Esophagus squamous epithelium (tissue), 5 donors: ENCODE measurements at regions of chr19 and their contacts with region 1.

Region 1: GRCh38 chr19:40662921-40663694 is 27.3 kb downstream of the NUMBL start:
- DNase-seq: peak; percentile 49
- H3K4me3 ChIP-seq: peak overlapping the region; percentile 59 to 83 (median 69)
- H3K27ac ChIP-seq: peak overlapping the region; percentile 79 to 93 (median 86)
- H3K4me1 ChIP-seq: peaks cover 5 to 32% (median 11%) of the 10 kb centered on the region in 3 donors
- H3K27me3 ChIP-seq: no peaks in the 10 kb centered on the region
- CTCF ChIP-seq: peak; percentile 97 to 99 (median 99)
- POLR2A ChIP-seq: peak in 1 of 4 donors; percentile 37

Region 2: GRCh38 chr19:40811478-40812341 is 148.6 kb after region 1 on chr19:
- intact Hi-C with region 1: loop called (anchors 5 kb)
- DNase-seq: no peak
- H3K4me3 ChIP-seq: peak overlapping the region; percentile 27 to 66 (median 50)
- H3K27ac ChIP-seq: peak overlapping the region; percentile 67 to 87 (median 84)
- H3K4me1 ChIP-seq: peaks cover 25 to 63% (median 45%) of the 10 kb centered on the region in 3 donors
- H3K27me3 ChIP-seq: no peaks in the 10 kb centered on the region
- CTCF ChIP-seq: peak in 1 of 6 experiments; percentile 11
- POLR2A ChIP-seq: no peak

Region 3: GRCh38 chr19:41133260-41133659 is 470.2 kb after region 1 on chr19:
- intact Hi-C with region 1: loop called (anchors 10 kb)
- DNase-seq: no peak
- H3K4me3 ChIP-seq: no peak overlapping the region
- H3K27ac ChIP-seq: no peak overlapping the region
- H3K4me1 ChIP-seq: peaks cover 0 to 39% (median 0%) of the 10 kb centered on the region in 3 donors
- H3K27me3 ChIP-seq: no peaks in the 10 kb centered on the region
- CTCF ChIP-seq: no peak
- POLR2A ChIP-seq: no peak